ENCODE measurements at regions of chr1 and their contacts with region 1.

Region 1: DNA sequence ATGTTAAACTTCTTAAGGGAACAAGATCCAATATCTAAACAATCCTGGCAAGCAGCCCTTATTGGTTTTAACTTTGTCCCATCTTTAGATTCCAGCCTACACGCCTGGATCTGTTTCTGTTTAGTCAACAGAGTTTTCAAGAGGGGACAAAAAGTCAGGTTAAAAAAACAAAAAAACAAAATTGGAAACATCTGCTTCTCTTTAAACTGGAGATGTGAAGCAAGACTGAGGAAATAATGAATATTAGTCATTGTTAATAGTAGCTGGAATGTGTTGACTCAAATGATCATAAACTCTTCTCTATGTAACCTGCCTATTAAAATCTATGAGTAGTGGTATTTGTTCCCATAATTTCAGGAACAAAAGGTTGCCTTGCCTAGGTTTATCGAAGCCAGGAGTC is 55.0 kb downstream of the NID1 start:
- DNase-seq: no peak
- H3K4me3 ChIP-seq: no peak overlapping the region
- H3K27ac ChIP-seq: peak overlapping the region; percentile 63 to 70 (median 68)
- H3K4me1 ChIP-seq: peaks cover 0 to 21% (median 17%) of the 10 kb centered on the region in 4 donors
- H3K27me3 ChIP-seq: no peaks in the 10 kb centered on the region
- CTCF ChIP-seq: no peak
- EP300 ChIP-seq: no peak
- POLR2A ChIP-seq: no peak

Region 2: DNA sequence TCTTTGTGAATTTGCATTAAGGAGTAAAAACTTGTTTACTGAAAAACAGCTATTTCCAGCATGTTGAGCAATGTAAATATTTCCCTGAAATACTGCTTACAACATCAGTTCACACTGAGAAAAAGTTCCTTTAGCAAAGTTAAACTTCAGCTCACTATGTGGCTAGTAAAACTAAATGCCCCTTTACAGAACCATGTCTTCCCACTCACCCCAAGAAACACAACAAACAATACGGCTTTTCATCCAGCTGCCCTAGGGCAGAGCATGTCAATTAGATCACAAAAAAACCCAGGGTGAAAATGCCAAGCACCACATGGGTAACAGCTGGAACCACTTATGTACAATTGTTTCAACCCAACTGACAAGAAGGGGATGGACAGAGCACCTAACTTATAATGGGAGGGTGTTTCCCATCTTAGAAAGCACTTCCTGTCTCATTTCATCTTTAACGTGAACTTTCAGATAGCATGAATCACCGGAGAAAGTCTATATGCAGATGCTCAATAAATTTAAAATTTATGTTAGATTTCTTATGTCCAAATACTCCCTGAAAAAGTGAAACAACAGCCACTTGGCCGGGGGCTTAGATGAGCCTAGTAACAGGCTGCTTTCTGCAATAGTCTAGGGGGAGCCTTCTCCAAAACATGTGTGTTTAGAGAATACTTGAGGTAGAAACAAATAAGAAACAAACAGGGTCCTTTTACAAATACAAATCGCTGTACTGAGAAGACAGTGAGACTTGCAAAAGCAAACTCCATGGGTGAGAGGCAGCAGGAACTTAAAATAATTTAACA is 48.5 kb after region 1 on chr1:
- intact Hi-C with region 1: loop called (anchors 10 kb)
- DNase-seq: peak; percentile 50
- H3K4me3 ChIP-seq: peak overlapping the region in 3 of 4 donors; percentile 7 to 94 (median 16)
- H3K27ac ChIP-seq: peak overlapping the region; percentile 97 to 100 (median 100)
- H3K4me1 ChIP-seq: peaks cover 0 to 71% (median 70%) of the 10 kb centered on the region in 4 donors
- H3K27me3 ChIP-seq: no peaks in the 10 kb centered on the region
- CTCF ChIP-seq: no peak
- EP300 ChIP-seq: no peak
- POLR2A ChIP-seq: no peak

Measured in sigmoid colon (tissue), 7 donors.